Esophagus muscularis mucosa (tissue), 4 donors: ENCODE measurements at regions of chr15 and their contacts with region 1.

Region 1: GRCh38 chr15:68637767-68638404 is 59.1 kb downstream of the CORO2B start:
- DNase-seq: no peak
- H3K4me3 ChIP-seq: no peak overlapping the region
- H3K27ac ChIP-seq: peak overlapping the region; percentile 32 to 62 (median 48)
- H3K4me1 ChIP-seq: peaks cover 40 to 66% (median 62%) of the 10 kb centered on the region in 4 donors
- H3K27me3 ChIP-seq: no peaks in the 10 kb centered on the region
- CTCF ChIP-seq: no peak
- EP300 ChIP-seq: no peak
- POLR2A ChIP-seq: no peak

Region 2: GRCh38 chr15:68586274-68586961 is 51.5 kb before region 1 on chr15:
- intact Hi-C with region 1: loop called (anchors 10 kb)
- DNase-seq: no peak
- H3K4me3 ChIP-seq: no peak overlapping the region
- H3K27ac ChIP-seq: peak overlapping the region; percentile 25 to 63 (median 42)
- H3K4me1 ChIP-seq: peaks cover 24 to 68% (median 32%) of the 10 kb centered on the region in 4 donors
- H3K27me3 ChIP-seq: peaks cover 0 to 8% (median 0%) of the 10 kb centered on the region in 4 donors
- CTCF ChIP-seq: no peak
- EP300 ChIP-seq: no peak
- POLR2A ChIP-seq: no peak